ENCODE measurements at regions of chr6 and their contacts with region 1.

Region 1: GRCh38 chr6:26216356-26216885 is 129.2 kb downstream of the HFE start:
- DNase-seq: peak; percentile 56 to 97 (median 93)
- ATAC-seq: peak; percentile 86
- H3K4me3 ChIP-seq: peak overlapping the region; percentile 72
- H3K4me3 Mint-ChIP-seq: no peak overlapping the region
- H3K27ac ChIP-seq: peak overlapping the region; percentile 84
- H3K27ac Mint-ChIP-seq: no peak overlapping the region
- H3K4me1 ChIP-seq: peaks cover 12 to 18% of the 10 kb centered on the region in 2 donors
- H3K4me1 Mint-ChIP-seq: peaks cover 3 to 31% (median 10%) of the 10 kb centered on the region in 7 donors
- H3K27me3 ChIP-seq: no peaks in the 10 kb centered on the region
- H3K27me3 Mint-ChIP-seq: no peaks in the 10 kb centered on the region

Region 2: GRCh38 chr6:26054857-26055669 is 161.4 kb before region 1 on chr6:
- CTCF ChIA-PET with region 1: no interaction called
- POLR2A ChIA-PET with region 1: interaction called, 37 read pairs
- intact Hi-C with region 1: no loop called
- DNase-seq: peak; percentile 54 to 94 (median 90)
- ATAC-seq: peak; percentile 81
- H3K4me3 ChIP-seq: peak overlapping the region; percentile 93
- H3K4me3 Mint-ChIP-seq: peak overlapping the region; percentile 88 to 99 (median 95)
- H3K27ac ChIP-seq: peak overlapping the region; percentile 83
- H3K27ac Mint-ChIP-seq: peak overlapping the region; percentile 95 to 99 (median 98)
- H3K4me1 ChIP-seq: peaks cover 0 to 14% of the 10 kb centered on the region in 2 donors
- H3K4me1 Mint-ChIP-seq: peaks cover 9 to 52% (median 10%) of the 10 kb centered on the region in 7 donors
- H3K27me3 ChIP-seq: no peaks in the 10 kb centered on the region
- H3K27me3 Mint-ChIP-seq: peaks cover 0 to 10% (median 0%) of the 10 kb centered on the region in 5 donors

Region 3: DNA sequence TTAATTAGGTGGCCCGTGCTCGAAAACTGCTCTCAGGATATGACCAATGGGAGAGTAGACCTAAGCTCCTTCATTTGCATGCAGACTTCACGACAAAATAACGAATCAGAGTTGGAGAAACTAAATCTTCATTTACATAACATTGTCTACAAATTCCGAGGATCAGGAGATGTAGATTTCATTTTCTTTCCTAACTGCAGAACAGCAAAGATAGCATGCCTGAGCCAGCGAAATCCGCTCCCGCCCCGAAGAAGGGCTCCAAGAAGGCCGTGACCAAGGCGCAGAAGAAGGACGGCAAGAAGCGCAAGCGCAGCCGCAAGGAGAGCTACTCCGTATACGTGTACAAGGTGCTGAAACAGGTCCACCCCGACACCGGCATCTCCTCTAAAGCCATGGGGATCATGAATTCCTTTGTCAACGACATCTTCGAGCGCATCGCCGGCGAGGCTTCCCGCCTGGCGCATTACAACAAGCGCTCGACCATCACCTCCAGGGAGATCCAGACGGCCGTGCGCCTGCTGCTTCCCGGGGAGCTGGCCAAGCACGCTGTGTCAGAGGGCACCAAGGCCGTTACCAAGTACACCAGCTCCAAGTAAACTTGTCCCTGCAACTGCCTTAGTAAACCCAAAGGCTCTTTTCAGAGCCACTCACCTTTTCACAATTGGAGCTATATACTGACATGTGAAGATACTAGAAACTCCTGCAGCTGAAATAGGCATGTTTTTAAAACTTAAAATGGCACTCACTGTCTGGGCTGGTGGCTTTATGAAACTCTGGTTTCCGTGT is 32.6 kb before region 1 on chr6:
- CTCF ChIA-PET with region 1: interaction called, 5 read pairs
- POLR2A ChIA-PET with region 1: interaction called, 3,606 read pairs
- intact Hi-C with region 1: loop called in 1 of 2 experiments (anchors 1 kb)
- DNase-seq: peak; percentile 43 to 83 (median 77)
- ATAC-seq: peak; percentile 91
- H3K4me3 ChIP-seq: peak overlapping the region; percentile 82
- H3K4me3 Mint-ChIP-seq: peak overlapping the region; percentile 84 to 99 (median 98)
- H3K27ac ChIP-seq: peak overlapping the region; percentile 76
- H3K27ac Mint-ChIP-seq: peak overlapping the region; percentile 83 to 99 (median 90)
- H3K4me1 ChIP-seq: peaks cover 13 to 30% of the 10 kb centered on the region in 2 donors
- H3K4me1 Mint-ChIP-seq: peaks cover 19 to 59% (median 49%) of the 10 kb centered on the region in 7 donors
- H3K27me3 ChIP-seq: no peaks in the 10 kb centered on the region
- H3K27me3 Mint-ChIP-seq: no peaks in the 10 kb centered on the region

Region 4: DNA sequence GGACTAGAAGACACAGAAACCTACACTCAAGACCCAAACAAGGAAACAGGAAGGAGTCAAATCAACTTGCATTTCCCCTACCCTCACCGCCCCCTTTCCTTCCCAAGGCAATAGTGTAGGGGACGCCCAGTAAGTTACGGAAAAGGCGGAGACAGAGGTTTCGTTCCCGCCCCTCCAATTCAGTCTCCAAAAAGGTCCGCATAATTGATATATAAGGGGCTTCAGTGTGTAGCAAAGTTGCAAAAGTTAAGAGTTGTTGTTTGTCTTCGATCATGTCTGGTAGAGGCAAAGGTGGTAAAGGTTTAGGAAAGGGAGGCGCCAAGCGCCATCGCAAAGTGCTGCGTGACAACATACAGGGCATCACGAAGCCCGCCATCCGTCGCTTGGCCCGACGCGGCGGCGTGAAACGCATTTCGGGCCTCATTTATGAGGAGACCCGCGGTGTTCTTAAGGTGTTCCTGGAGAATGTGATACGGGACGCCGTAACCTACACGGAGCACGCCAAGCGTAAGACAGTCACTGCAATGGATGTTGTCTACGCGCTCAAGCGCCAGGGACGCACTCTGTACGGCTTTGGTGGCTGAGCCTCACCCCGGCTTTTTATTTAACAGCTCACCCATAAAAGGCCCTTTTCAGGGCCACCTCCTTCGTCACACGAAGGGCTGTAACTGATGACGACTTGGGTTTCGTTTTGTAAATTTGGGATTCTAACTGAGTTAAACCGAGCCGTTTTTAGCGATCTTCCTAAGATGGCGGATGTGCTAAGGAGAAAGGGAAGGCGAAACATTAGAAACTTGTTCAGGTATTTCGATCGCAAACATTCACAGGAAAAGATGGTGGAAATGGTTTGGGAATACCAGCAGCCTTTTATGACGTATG is 24.0 kb after region 1 on chr6:
- CTCF ChIA-PET with region 1: no interaction called
- POLR2A ChIA-PET with region 1: interaction called, 2,165 read pairs
- intact Hi-C with region 1: no loop called
- DNase-seq: peak; percentile 56 to 90 (median 78)
- ATAC-seq: peak; percentile 87
- H3K4me3 ChIP-seq: peak overlapping the region; percentile 55
- H3K4me3 Mint-ChIP-seq: peak overlapping the region; percentile 80 to 93 (median 89)
- H3K27ac ChIP-seq: peak overlapping the region; percentile 83
- H3K27ac Mint-ChIP-seq: peak overlapping the region; percentile 89 to 99 (median 96)
- H3K4me1 ChIP-seq: peaks cover 6 to 11% of the 10 kb centered on the region in 2 donors
- H3K4me1 Mint-ChIP-seq: peaks cover 8 to 37% (median 25%) of the 10 kb centered on the region in 7 donors
- H3K27me3 ChIP-seq: no peaks in the 10 kb centered on the region
- H3K27me3 Mint-ChIP-seq: no peaks in the 10 kb centered on the region

Region 5: GRCh38 chr6:26312501-26313390 is 96.3 kb after region 1 on chr6:
- CTCF ChIA-PET with region 1: no interaction called
- POLR2A ChIA-PET with region 1: interaction called, 19 read pairs
- intact Hi-C with region 1: no loop called
- DNase-seq: peak; percentile 64 to 91 (median 86)
- ATAC-seq: peak; percentile 75
- H3K4me3 ChIP-seq: peak overlapping the region; percentile 81
- H3K4me3 Mint-ChIP-seq: peak overlapping the region; percentile 83 to 100 (median 96)
- H3K27ac ChIP-seq: peak overlapping the region; percentile 55
- H3K27ac Mint-ChIP-seq: peak overlapping the region; percentile 82 to 100 (median 96)
- H3K4me1 ChIP-seq: peaks cover 4 to 19% of the 10 kb centered on the region in 2 donors
- H3K4me1 Mint-ChIP-seq: peaks cover 5 to 51% (median 37%) of the 10 kb centered on the region in 7 donors
- H3K27me3 ChIP-seq: no peaks in the 10 kb centered on the region
- H3K27me3 Mint-ChIP-seq: peaks cover 0 to 8% (median 0%) of the 10 kb centered on the region in 5 donors

Region 6: GRCh38 chr6:26436018-26436417 is 219.6 kb after region 1 on chr6:
- CTCF ChIA-PET with region 1: no interaction called
- POLR2A ChIA-PET with region 1: no interaction called
- intact Hi-C with region 1: no loop called
- DNase-seq: no peak
- ATAC-seq: no peak
- H3K4me3 ChIP-seq: no peak overlapping the region
- H3K4me3 Mint-ChIP-seq: no peak overlapping the region
- H3K27ac ChIP-seq: no peak overlapping the region
- H3K27ac Mint-ChIP-seq: no peak overlapping the region
- H3K4me1 ChIP-seq: peaks cover 8 to 11% of the 10 kb centered on the region in 2 donors
- H3K4me1 Mint-ChIP-seq: peaks cover 12 to 22% (median 15%) of the 10 kb centered on the region in 7 donors
- H3K27me3 ChIP-seq: no peaks in the 10 kb centered on the region
- H3K27me3 Mint-ChIP-seq: no peaks in the 10 kb centered on the region

Region 7: DNA sequence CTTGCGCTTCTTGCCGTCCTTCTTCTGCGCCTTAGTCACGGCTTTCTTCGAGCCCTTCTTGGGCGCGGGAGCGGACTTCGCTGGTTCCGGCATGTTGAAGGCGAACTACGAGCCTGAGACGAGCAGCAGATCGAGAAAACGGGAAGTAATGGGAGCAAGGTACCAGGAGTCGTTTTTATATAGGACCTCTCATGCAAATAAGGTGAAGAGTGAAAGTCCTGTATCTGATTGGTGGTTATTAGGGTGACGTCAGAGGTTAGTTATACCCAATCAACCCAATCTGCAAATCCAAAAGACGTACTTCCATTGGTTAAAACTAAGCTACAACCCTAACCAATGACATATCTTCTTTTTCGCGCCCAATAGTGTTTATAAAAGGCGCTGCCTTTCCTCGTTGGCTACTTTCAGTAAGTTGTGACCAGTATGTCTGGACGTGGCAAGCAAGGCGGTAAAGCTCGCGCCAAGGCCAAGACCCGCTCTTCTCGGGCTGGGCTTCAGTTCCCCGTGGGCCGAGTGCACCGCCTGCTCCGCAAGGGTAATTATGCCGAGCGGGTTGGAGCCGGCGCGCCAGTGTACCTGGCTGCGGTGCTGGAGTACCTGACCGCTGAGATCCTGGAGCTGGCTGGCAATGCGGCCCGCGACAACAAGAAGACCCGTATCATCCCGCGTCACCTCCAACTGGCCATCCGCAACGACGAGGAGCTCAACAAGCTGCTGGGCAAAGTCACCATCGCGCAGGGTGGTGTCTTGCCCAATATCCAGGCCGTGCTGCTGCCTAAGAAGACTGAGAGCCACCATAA is 930.5 kb after region 1 on chr6:
- CTCF ChIA-PET with region 1: no interaction called
- POLR2A ChIA-PET with region 1: interaction called, 25 read pairs
- intact Hi-C with region 1: loop called (anchors 1 to 5 kb)
- DNase-seq: peak; percentile 71 to 96 (median 92)
- ATAC-seq: peak; percentile 92
- H3K4me3 ChIP-seq: peak overlapping the region; percentile 90
- H3K4me3 Mint-ChIP-seq: no peak overlapping the region
- H3K27ac ChIP-seq: peak overlapping the region; percentile 89
- H3K27ac Mint-ChIP-seq: no peak overlapping the region
- H3K4me1 ChIP-seq: peaks cover 6 to 7% of the 10 kb centered on the region in 2 donors
- H3K4me1 Mint-ChIP-seq: peaks cover 0 to 26% (median 14%) of the 10 kb centered on the region in 7 donors
- H3K27me3 ChIP-seq: no peaks in the 10 kb centered on the region
- H3K27me3 Mint-ChIP-seq: no peaks in the 10 kb centered on the region

Region 8: GRCh38 chr6:27871924-27872638 is 1655.7 kb after region 1 on chr6:
- CTCF ChIA-PET with region 1: no interaction called
- POLR2A ChIA-PET with region 1: interaction called, 27 read pairs
- intact Hi-C with region 1: no loop called
- DNase-seq: peak; percentile 68 to 97 (median 94)
- ATAC-seq: peak; percentile 88
- H3K4me3 ChIP-seq: peak overlapping the region; percentile 69
- H3K4me3 Mint-ChIP-seq: peak overlapping the region; percentile 83 to 99 (median 94)
- H3K27ac ChIP-seq: peak overlapping the region; percentile 84
- H3K27ac Mint-ChIP-seq: peak overlapping the region; percentile 95 to 98 (median 97)
- H3K4me1 ChIP-seq: peaks cover under 1 to 19% of the 10 kb centered on the region in 2 donors
- H3K4me1 Mint-ChIP-seq: peaks cover 15 to 69% (median 42%) of the 10 kb centered on the region in 7 donors
- H3K27me3 ChIP-seq: no peaks in the 10 kb centered on the region
- H3K27me3 Mint-ChIP-seq: peaks cover 0 to 8% (median 0%) of the 10 kb centered on the region in 5 donors